ENCODE measurements at regions of chr7 and their contacts with region 1.

Region 1: DNA sequence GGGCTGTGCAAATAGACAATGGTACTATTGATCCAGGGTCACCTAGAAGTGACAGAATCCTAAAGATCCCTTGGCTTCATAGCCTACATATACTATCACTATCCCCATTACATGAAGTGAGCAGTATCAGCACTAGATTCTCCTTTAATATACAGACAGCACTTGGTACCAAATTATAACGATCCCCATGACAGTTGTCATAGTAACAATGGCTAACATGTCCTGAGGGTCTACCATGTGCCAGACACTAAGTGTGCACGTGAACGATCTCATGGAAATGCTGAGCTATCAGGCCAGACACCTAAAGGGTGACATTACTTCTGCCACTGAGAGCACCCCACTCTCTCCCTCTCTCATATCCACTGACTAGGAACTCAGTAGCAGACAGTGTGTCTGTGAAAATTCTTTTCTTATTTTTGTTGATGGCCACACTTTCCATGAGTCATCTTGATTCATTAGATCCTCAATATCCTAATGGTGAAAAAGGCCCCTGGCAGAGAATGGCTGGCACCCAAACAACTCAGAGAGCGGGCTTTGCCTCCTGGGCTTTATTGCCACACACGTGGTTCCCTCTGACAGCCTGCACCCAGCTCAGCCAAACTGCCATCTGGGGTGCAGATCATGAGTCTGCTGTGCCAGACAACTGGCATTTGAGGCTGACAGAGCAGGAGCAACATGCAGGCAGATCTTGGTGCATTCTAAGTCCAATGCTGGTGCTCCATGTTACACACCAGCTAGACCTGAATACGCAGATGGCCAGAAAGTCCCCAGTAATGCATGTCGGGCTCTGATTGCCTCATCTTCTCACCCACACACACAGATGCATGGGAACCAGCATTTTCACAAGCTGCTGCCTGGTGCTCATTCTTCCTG is 176.3 kb downstream of the DGKI start:
- DNase-seq: peak; percentile 45
- CTCF ChIP-seq: no peak

Region 2: GRCh38 chr7:137519947-137520346 is 150.5 kb before region 1 on chr7:
- CTCF ChIA-PET with region 1: no interaction called
- POLR2A ChIA-PET with region 1: no interaction called
- DNase-seq: no peak
- CTCF ChIP-seq: no peak

Region 3: GRCh38 chr7:137681657-137682562 is 11.5 kb after region 1 on chr7:
- CTCF ChIA-PET with region 1: interaction called, 13 read pairs
- POLR2A ChIA-PET with region 1: no interaction called
- DNase-seq: no peak
- CTCF ChIP-seq: no peak

Region 4: GRCh38 chr7:137747359-137748031 is 77.1 kb after region 1 on chr7:
- CTCF ChIA-PET with region 1: no interaction called
- POLR2A ChIA-PET with region 1: no interaction called
- DNase-seq: no peak
- CTCF ChIP-seq: no peak